ENCODE measurements at regions of chr9 and their contacts with region 1.

Region 1: GRCh38 chr9:7536310-7536939 is 263.2 kb downstream of the DMAC1 start:
- DNase-seq: peak in 4 of 5 donors; percentile 42 to 59 (median 44)
- ATAC-seq: peak in 3 of 4 donors; percentile 67 to 77 (median 72)
- H3K4me3 ChIP-seq: no peak overlapping the region
- H3K27ac ChIP-seq: no peak overlapping the region
- H3K4me1 ChIP-seq: peaks cover 0 to 4% (median 0%) of the 10 kb centered on the region in 12 donors
- H3K27me3 ChIP-seq: no peaks in the 10 kb centered on the region
- CTCF ChIP-seq: peak; percentile 55 to 75 (median 66)
- POLR2A ChIP-seq: no peak

Region 2: GRCh38 chr9:6907772-6908381 is 628.5 kb before region 1 on chr9:
- intact Hi-C with region 1: loop called in 2 of 10 experiments (anchors 10 kb)
- DNase-seq: no peak
- ATAC-seq: peak in 1 of 4 donors; percentile 38
- H3K4me3 ChIP-seq: no peak overlapping the region
- H3K27ac ChIP-seq: no peak overlapping the region
- H3K4me1 ChIP-seq: peaks cover 0 to 9% (median 0%) of the 10 kb centered on the region in 12 donors
- H3K27me3 ChIP-seq: no peaks in the 10 kb centered on the region
- CTCF ChIP-seq: peak; percentile 28 to 70 (median 54)
- POLR2A ChIP-seq: no peak

Region 3: DNA sequence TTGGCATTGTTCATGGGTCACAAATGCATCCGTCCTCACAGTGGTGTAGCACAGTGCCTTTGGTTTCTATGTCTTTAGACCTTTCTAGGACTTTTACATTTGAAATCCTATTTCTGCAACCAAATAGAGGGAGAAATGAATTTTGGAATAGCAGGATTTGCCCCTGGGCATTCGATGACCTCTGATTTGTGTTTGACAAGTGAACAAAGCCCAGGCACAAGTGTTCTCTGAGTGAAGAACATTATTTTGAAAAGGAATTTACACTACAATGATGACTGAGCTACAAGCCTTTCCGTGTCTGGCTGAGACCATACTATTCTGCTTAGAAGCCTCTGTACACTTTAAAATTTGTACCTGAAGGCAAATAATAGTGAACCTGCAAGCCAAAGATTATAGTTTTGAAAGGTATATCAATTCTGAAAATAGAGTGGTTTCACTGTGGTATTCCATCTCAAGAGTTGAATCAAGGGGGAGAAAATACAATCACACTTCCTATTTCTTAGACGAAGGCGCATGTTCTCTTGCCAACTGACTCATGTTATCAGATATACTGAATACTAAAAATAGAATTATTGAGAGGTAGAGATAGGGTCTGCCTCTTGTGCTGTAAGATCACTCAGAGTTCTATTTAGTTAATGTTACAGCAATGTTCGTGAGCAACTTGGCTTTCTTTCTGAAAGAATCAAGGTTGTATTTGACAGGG is 481.1 kb before region 1 on chr9:
- intact Hi-C with region 1: loop called in 9 of 10 experiments (anchors 2 to 10 kb)
- DNase-seq: no peak
- ATAC-seq: no peak
- H3K4me3 ChIP-seq: no peak overlapping the region
- H3K27ac ChIP-seq: no peak overlapping the region
- H3K4me1 ChIP-seq: peaks cover 0 to 8% (median 0%) of the 10 kb centered on the region in 12 donors
- H3K27me3 ChIP-seq: no peaks in the 10 kb centered on the region
- CTCF ChIP-seq: no peak
- POLR2A ChIP-seq: no peak

Region 4: DNA sequence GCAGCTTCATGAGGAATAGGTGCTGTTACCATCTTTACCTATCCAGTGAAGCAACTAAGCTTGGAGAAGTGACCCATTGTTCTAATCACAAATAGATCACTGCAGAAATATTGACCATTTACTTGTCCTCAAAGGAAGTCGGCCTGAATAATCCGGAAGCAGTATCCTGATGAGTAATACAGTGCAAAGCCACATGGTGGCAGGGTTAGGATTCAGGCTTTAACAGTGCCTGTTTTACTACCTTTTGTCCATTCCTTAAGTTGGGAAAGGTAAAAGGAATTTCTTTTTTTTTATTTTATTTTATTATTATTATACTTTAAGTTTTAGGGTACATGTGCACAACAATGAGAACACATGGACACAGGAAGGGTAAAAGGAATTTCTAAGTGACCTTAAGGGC is 442.4 kb before region 1 on chr9:
- intact Hi-C with region 1: loop called in 1 of 10 experiments (anchors 10 kb)
- DNase-seq: no peak
- ATAC-seq: peak in 3 of 4 donors; percentile 42 to 58 (median 55)
- H3K4me3 ChIP-seq: no peak overlapping the region
- H3K27ac ChIP-seq: no peak overlapping the region
- H3K4me1 ChIP-seq: peaks cover 0 to 20% (median 5%) of the 10 kb centered on the region in 12 donors
- H3K27me3 ChIP-seq: no peaks in the 10 kb centered on the region
- CTCF ChIP-seq: peak in 9 of 12 donors; percentile 21 to 48 (median 34)
- POLR2A ChIP-seq: no peak

Region 5: GRCh38 chr9:7165349-7165975 is 371.0 kb before region 1 on chr9:
- intact Hi-C with region 1: no loop called
- DNase-seq: no peak
- ATAC-seq: no peak
- H3K4me3 ChIP-seq: no peak overlapping the region
- H3K27ac ChIP-seq: no peak overlapping the region
- H3K4me1 ChIP-seq: peaks cover 0 to 18% (median 0%) of the 10 kb centered on the region in 12 donors
- H3K27me3 ChIP-seq: no peaks in the 10 kb centered on the region
- CTCF ChIP-seq: no peak
- POLR2A ChIP-seq: no peak

Region 6: DNA sequence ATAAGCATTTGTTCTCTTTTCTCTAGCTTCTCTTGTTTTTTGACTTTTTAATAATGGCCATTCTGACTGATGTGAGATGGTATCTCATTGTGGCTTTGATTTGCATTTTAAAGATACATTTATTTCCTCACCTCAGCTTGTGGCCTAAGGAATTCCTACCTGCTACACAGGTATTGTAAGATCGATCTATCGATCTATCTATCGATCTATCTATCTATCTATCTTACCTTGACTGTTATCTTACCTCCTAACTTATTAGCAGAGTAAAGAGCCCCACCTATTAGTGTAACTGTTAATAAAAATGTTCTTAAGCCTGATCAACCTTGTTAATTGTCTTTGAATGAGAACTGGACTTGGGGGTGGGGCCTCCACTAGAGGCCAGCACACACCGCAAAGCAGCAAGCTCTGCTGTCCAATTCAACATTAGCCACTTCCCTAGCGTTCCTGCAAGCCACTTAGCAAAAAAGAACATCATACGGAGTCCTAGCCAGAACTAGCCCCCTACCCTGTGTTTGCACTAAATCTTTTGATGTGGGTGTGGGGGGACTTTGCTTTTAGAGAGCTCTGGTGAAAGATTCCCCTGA is 262.9 kb before region 1 on chr9:
- intact Hi-C with region 1: loop called in 7 of 10 experiments (anchors 5 to 10 kb)
- DNase-seq: peak in 3 of 5 donors; percentile 20 to 32 (median 23)
- ATAC-seq: peak in 3 of 4 donors; percentile 51 to 64 (median 57)
- H3K4me3 ChIP-seq: no peak overlapping the region
- H3K27ac ChIP-seq: no peak overlapping the region
- H3K4me1 ChIP-seq: peaks cover 0 to 4% (median 0%) of the 10 kb centered on the region in 12 donors
- H3K27me3 ChIP-seq: peaks cover 0 to 3% (median 0%) of the 10 kb centered on the region in 9 donors
- CTCF ChIP-seq: peak; percentile 16 to 75 (median 54)
- POLR2A ChIP-seq: no peak

Region 7: DNA sequence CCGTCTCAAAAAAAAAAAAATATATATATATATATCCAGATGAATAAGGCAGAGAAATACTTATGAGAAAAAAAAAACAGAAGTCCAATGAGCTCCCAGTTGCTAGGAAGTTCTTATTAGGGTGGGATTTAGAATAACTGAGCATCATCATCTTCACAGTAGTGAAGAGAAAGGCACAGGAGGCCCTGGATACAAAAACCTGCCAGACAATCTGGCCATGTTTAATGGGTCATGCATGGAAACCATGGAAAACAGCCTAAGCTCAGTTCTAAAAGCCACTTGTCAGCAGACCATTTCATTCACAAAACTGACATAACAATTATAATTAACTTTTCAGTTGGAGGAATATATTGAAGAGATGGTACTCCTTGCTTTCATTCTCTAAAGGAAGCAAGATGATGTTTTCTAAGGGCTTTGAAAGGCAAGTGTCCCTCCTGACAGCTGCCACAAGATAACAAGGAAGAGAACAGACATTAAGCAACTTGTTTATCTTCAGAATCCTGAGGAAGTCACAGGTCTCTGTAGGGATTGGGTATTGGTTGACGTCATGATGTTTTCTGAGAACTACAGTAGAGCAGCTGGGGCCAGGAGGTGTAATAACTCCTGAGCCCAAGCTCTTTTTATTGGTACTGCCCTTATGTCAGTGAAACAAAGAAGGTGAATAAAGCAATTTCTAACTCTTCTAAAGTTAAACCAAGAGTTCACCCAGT is 199.9 kb before region 1 on chr9:
- intact Hi-C with region 1: loop called in 1 of 10 experiments (anchors 10 kb)
- DNase-seq: peak in 3 of 5 donors; percentile 29 to 59 (median 36)
- ATAC-seq: peak; percentile 79 to 97 (median 88)
- H3K4me3 ChIP-seq: no peak overlapping the region
- H3K27ac ChIP-seq: peak overlapping the region in 6 of 12 donors; percentile 22 to 56 (median 40)
- H3K4me1 ChIP-seq: no peaks in the 10 kb centered on the region
- H3K27me3 ChIP-seq: no peaks in the 10 kb centered on the region
- CTCF ChIP-seq: no peak
- POLR2A ChIP-seq: no peak

Region 8: GRCh38 chr9:7405924-7406604 is 130.4 kb before region 1 on chr9:
- intact Hi-C with region 1: loop called in 8 of 10 experiments (anchors 2 to 5 kb)
- DNase-seq: no peak
- ATAC-seq: no peak
- H3K4me3 ChIP-seq: no peak overlapping the region
- H3K27ac ChIP-seq: peak overlapping the region in 1 of 12 donors; percentile 70
- H3K4me1 ChIP-seq: peaks cover 0 to 25% (median 6%) of the 10 kb centered on the region in 12 donors
- H3K27me3 ChIP-seq: no peaks in the 10 kb centered on the region
- CTCF ChIP-seq: no peak
- POLR2A ChIP-seq: no peak